Thyroid gland (tissue), 4 donors: ENCODE measurements at regions of chr9 and their contacts with region 1.

Region 1: DNA sequence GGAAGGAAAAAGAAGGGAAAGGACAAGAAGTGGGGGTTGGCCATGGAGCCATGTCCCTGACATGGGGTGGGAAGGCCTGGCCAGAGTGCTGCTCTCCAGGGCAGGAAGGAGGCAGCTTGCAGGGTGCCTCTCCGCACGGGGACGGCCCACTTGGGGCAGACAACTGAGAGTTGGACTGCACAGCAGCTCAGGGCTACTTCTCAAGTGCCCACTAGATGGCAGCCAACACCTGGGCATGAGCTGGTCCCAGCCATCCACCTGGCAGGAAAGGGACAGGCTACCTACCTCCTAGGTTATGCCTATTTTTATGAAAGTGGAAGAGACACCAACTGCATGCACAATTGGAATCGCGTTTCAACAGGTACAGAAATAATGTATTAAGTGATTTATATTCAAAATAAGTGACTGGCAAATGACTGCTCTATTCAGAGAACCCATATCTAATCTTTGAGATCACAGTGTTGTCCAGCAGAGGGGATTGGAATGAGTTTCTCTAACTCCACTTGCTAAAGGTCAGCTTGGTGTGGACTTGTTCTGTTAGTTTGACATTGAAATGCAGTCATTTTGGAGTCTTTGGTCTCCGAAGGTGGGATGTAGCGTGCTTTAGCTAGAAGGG is 113.4 kb downstream of the SYK start:
- DNase-seq: peak; percentile 86 to 89
- H3K4me3 ChIP-seq: no peak overlapping the region
- H3K27ac ChIP-seq: peak overlapping the region; percentile 63 to 77 (median 71)
- H3K4me1 ChIP-seq: peaks cover 14 to 20% of the 10 kb centered on the region in 2 donors
- H3K27me3 ChIP-seq: no peaks in the 10 kb centered on the region
- CTCF ChIP-seq: peak; percentile 69 to 98 (median 90)
- POLR2A ChIP-seq: no peak

Region 2: DNA sequence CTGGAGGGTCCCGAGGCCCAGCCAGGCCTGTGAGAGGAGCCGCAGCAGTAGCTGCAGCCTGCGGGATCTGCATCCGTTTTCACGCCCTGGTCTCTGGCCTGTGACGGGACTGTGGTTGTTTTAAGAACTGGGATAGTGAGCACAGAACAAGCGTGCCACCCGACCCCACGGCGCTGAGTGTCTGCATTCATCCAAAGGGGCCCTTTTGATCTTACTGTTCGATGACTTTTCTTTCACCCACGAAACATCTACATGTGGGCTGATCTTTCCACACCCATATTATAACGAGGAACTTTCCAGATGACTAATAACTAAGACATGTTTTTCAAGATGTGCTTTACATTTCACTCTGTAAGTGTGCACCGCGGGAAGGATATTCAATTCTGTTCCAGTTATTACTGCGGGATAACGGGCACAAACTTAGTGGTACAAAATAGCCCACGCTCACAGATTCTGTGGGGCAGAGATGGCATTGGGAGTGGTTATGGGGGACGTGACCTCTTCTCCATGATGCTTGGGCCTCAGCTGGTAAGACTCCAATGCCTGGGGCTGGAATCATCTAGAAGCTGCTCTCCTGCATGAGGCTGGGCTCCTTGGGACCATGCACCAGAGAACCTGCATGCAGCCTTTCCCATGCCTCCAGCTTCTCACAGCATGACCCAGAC is 51.6 kb after region 1 on chr9:
- intact Hi-C with region 1: no loop called
- DNase-seq: peak; percentile 74 to 76
- H3K4me3 ChIP-seq: no peak overlapping the region
- H3K27ac ChIP-seq: peak overlapping the region; percentile 98 to 99 (median 99)
- H3K4me1 ChIP-seq: peaks cover 36 to 52% of the 10 kb centered on the region in 2 donors
- H3K27me3 ChIP-seq: no peaks in the 10 kb centered on the region
- CTCF ChIP-seq: no peak
- POLR2A ChIP-seq: peak in 1 of 2 donors; percentile 51

Region 3: DNA sequence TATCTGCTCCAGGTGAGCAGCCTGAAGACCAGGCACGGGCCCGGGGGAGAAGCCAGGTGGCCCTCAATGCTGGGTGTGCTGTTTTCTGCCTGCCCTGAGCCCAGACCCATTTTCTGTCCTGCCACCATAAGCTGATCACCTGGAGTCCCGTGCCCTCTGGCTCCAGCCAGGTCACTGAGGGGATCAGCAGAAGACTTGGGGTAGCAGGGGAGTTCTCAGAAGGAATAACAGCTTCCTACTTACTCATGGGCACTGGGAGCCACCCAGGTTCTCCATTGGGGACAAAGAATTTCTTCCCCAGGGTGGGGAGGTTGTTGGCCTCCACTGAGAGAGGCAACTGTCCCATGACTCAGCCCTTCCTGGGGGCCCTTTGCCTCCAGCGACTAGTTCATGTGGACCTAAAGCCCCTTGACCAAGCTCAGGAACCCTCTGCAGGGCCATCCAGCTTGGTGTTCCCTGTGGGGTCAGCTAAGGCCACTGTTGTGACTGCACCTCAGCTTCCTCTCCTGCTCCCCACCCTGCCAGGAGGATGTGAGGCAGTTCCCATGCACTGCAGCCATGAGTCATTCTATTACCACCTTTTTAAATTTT is 271.6 kb after region 1 on chr9:
- intact Hi-C with region 1: loop called (anchors 5 kb)
- DNase-seq: no peak
- H3K4me3 ChIP-seq: no peak overlapping the region
- H3K27ac ChIP-seq: no peak overlapping the region
- H3K4me1 ChIP-seq: peaks cover 1 to 10% of the 10 kb centered on the region in 2 donors
- H3K27me3 ChIP-seq: no peaks in the 10 kb centered on the region
- CTCF ChIP-seq: no peak
- POLR2A ChIP-seq: no peak

Region 4: DNA sequence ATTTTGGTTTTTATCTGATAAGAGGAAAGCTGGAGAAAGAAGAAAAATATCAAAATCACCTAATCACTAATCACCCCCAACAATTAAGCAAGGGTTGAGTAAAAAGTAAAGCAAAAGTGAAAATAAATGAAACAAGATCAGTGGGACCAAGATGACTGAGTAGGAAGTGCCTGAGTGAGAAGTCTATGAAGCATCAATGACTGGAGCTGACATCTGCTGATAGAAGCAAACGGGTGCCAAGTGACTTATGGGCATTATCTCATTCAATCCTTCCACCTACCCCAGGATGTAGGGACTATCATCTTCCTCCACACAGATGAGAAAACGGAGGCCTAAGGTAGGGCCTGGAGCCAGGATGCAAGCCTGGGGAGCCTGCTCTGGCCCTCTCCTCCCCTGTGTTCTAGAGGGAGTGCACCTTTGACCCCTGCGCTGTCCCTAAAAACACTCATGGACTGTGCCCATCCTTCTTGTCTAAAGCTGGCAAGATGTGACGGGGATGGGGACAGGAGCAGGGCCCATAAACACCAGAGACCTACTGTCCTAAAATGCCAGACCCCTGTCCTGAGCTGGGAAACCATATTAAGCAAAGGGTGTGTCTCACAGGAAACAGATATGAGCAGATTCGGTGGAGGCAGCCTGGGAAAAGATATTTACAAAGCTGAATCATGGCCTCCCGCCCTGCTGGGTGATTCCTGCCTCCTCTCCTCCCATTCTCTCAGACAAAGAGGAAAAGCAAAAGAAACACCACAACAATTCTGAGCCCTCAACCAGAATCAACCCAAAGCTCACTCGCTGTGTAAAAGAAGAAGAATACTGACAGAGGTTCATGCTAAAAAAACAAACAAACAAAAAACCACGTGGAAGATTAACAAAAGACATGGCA is 330.7 kb after region 1 on chr9:
- intact Hi-C with region 1: no loop called
- DNase-seq: no peak
- H3K4me3 ChIP-seq: no peak overlapping the region
- H3K27ac ChIP-seq: no peak overlapping the region
- H3K4me1 ChIP-seq: peaks cover 7 to 8% of the 10 kb centered on the region in 2 donors
- H3K27me3 ChIP-seq: no peaks in the 10 kb centered on the region
- CTCF ChIP-seq: no peak
- POLR2A ChIP-seq: no peak

Region 5: GRCh38 chr9:91681461-91682305 is 766.7 kb after region 1 on chr9:
- intact Hi-C with region 1: loop called (anchors 10 kb)
- DNase-seq: peak; percentile 77 to 82
- H3K4me3 ChIP-seq: no peak overlapping the region
- H3K27ac ChIP-seq: no peak overlapping the region
- H3K4me1 ChIP-seq: no peaks in the 10 kb centered on the region
- H3K27me3 ChIP-seq: no peaks in the 10 kb centered on the region
- CTCF ChIP-seq: peak; percentile 66 to 97 (median 80)
- POLR2A ChIP-seq: no peak

Region 6: DNA sequence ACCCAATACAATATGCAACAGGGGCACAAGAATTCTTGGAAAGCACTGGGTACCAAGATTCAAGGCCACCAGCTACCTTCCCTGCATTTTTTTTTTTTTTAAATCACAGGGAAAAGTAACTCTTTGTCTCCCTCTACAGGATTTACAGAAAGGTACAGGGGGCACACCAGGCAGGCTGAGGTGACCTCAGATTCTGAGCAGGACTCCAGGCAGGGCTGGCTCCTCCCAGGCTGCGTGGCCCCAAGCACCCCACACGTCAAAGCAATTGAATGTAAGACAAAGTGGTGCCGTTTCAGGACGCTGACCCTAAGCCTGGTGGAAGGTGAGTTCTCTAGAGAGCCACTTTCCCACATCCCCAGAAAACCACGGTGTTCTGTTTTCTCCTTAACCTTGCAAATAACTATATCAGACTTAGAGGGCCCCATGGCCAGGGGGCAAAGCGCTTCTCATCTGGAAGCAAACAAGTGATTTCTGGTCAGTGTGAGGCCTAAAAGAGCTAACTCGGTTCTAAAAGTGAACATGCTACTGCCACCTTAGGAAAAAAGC is 812.4 kb after region 1 on chr9:
- intact Hi-C with region 1: loop called (anchors 5 kb)
- DNase-seq: peak; percentile 19 to 21
- H3K4me3 ChIP-seq: no peak overlapping the region
- H3K27ac ChIP-seq: no peak overlapping the region
- H3K4me1 ChIP-seq: no peaks in the 10 kb centered on the region
- H3K27me3 ChIP-seq: no peaks in the 10 kb centered on the region
- CTCF ChIP-seq: peak; percentile 39 to 69 (median 54)
- POLR2A ChIP-seq: no peak